Activated naive CD4-positive, alpha-beta T cell treated with anti-CD3 and anti-CD28 coated beads for 36 hours (primary cell): ENCODE measurements at regions of chr3 and their contacts with region 1.

Region 1: DNA sequence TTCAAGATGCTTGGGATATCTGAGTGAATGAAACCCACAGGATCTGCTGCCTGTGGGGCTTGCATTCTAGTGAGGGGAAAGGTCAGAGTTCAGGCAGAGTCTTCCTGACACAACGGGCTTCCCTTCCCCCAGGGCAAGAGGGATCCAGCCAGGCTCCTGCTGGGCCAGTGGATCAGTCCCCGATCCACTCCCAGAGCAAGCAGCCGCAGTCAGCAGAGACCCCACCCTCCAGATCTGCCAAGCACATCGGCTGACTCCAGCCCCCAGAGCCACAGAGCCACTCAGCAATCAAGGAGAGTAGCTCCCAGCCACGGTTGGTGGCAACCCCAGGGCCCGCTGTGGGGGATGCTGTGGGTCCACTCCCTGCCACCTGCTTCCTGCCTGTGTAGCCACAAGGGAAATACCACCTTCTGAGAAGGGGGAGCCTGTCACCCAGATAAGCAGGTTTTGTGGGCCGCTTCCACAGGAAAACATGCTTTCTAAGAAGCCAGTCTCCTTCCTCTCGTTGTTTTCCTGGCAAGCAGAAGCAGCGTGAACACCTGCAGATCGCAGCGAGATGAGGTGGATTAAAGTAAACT is 44.9 kb downstream of the CPN2 start:
- DNase-seq: peak; percentile 83
- H3K4me3 Mint-ChIP-seq: no peak overlapping the region
- H3K27ac Mint-ChIP-seq: peak overlapping the region; percentile 94
- H3K4me1 Mint-ChIP-seq: peaks cover 37% of the 10 kb centered on the region
- H3K27me3 Mint-ChIP-seq: no peaks in the 10 kb centered on the region

Region 2: GRCh38 chr3:192892981-192893700 is 1413.1 kb before region 1 on chr3:
- CTCF ChIA-PET with region 1: no interaction called
- intact Hi-C with region 1: loop called (anchors 10 kb)
- DNase-seq: peak; percentile 86
- H3K4me3 Mint-ChIP-seq: peak overlapping the region; percentile 26
- H3K27ac Mint-ChIP-seq: peak overlapping the region; percentile 77
- H3K4me1 Mint-ChIP-seq: peaks cover 83% of the 10 kb centered on the region
- H3K27me3 Mint-ChIP-seq: peaks cover 26% of the 10 kb centered on the region

Region 3: DNA sequence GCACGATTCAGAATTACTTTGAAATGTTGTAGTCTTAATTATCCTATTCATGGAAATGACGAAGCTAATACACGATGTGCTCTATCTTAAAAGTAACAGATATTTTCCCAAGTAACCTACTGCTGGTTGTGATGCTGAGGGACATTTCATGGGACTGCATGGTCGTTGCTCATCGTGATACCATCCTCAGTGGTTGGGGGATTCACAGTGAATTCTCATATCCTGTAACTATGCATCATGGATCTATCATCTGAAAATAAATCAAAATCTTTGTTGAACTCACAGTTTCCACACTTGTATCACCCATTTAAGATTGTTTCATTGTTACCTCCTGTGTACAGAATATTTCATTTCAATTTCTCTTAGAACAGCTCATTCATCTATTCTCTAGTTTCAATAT is 628.5 kb before region 1 on chr3:
- CTCF ChIA-PET with region 1: no interaction called
- intact Hi-C with region 1: loop called (anchors 2 kb)
- DNase-seq: peak; percentile 53
- H3K4me3 Mint-ChIP-seq: no peak overlapping the region
- H3K27ac Mint-ChIP-seq: peak overlapping the region; percentile 55
- H3K4me1 Mint-ChIP-seq: peaks cover 10% of the 10 kb centered on the region
- H3K27me3 Mint-ChIP-seq: no peaks in the 10 kb centered on the region

Region 4: DNA sequence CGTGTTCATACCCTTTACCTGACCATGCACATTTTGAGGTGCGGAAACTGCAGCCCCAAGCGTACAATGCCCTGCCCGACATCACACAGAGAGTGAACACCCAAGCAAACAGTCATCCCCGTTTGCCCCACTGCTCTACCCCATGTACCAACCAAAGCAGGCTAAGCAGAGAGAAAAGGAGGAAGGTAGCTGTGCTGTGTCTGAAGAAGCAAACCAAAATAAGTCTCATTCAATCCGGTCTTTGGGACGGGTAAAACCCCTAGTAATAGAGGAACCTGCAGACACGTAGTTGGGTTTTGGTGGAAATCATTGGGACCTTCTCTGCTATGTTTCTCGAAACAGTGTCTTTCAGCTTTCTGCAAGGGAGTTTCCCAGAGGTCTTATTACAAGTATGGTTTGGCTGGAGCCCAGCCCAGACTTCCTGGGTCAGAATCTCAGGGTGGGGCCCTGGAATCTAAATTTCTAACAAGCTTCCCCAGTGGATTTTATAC is 334.9 kb before region 1 on chr3:
- CTCF ChIA-PET with region 1: no interaction called
- intact Hi-C with region 1: loop called (anchors 1 kb)
- DNase-seq: peak; percentile 40
- H3K4me3 Mint-ChIP-seq: no peak overlapping the region
- H3K27ac Mint-ChIP-seq: peak overlapping the region; percentile 2
- H3K4me1 Mint-ChIP-seq: peaks cover 18% of the 10 kb centered on the region
- H3K27me3 Mint-ChIP-seq: peaks cover 18% of the 10 kb centered on the region

Region 5: GRCh38 chr3:194141415-194142155 is 164.6 kb before region 1 on chr3:
- CTCF ChIA-PET with region 1: no interaction called
- intact Hi-C with region 1: loop called (anchors 1 kb)
- DNase-seq: peak; percentile 86
- H3K4me3 Mint-ChIP-seq: peak overlapping the region; percentile 72
- H3K27ac Mint-ChIP-seq: peak overlapping the region; percentile 91
- H3K4me1 Mint-ChIP-seq: peaks cover 21% of the 10 kb centered on the region
- H3K27me3 Mint-ChIP-seq: peaks cover 34% of the 10 kb centered on the region

Region 6: GRCh38 chr3:194224471-194225415 is 81.5 kb before region 1 on chr3:
- CTCF ChIA-PET with region 1: no interaction called
- intact Hi-C with region 1: no loop called
- DNase-seq: no peak
- H3K4me3 Mint-ChIP-seq: no peak overlapping the region
- H3K27ac Mint-ChIP-seq: no peak overlapping the region
- H3K4me1 Mint-ChIP-seq: peaks cover 6% of the 10 kb centered on the region
- H3K27me3 Mint-ChIP-seq: peaks cover 11% of the 10 kb centered on the region

Region 7: GRCh38 chr3:194255252-194256039 is 50.8 kb before region 1 on chr3:
- CTCF ChIA-PET with region 1: no interaction called
- intact Hi-C with region 1: loop called (anchors 1 kb)
- DNase-seq: peak; percentile 78
- H3K4me3 Mint-ChIP-seq: peak overlapping the region; percentile 35
- H3K27ac Mint-ChIP-seq: peak overlapping the region; percentile 56
- H3K4me1 Mint-ChIP-seq: peaks cover 11% of the 10 kb centered on the region
- H3K27me3 Mint-ChIP-seq: no peaks in the 10 kb centered on the region

Region 8: GRCh38 chr3:194323785-194324735 is 17.9 kb after region 1 on chr3:
- CTCF ChIA-PET with region 1: interaction called, 3 read pairs
- intact Hi-C with region 1: loop called (anchors 1 kb)
- DNase-seq: peak; percentile 32
- H3K4me3 Mint-ChIP-seq: no peak overlapping the region
- H3K27ac Mint-ChIP-seq: no peak overlapping the region
- H3K4me1 Mint-ChIP-seq: peaks cover 3% of the 10 kb centered on the region
- H3K27me3 Mint-ChIP-seq: peaks cover 3% of the 10 kb centered on the region